CD8-positive, alpha-beta T cell (primary cell): ENCODE measurements at regions of chr11 and their contacts with region 1.

Region 1: DNA sequence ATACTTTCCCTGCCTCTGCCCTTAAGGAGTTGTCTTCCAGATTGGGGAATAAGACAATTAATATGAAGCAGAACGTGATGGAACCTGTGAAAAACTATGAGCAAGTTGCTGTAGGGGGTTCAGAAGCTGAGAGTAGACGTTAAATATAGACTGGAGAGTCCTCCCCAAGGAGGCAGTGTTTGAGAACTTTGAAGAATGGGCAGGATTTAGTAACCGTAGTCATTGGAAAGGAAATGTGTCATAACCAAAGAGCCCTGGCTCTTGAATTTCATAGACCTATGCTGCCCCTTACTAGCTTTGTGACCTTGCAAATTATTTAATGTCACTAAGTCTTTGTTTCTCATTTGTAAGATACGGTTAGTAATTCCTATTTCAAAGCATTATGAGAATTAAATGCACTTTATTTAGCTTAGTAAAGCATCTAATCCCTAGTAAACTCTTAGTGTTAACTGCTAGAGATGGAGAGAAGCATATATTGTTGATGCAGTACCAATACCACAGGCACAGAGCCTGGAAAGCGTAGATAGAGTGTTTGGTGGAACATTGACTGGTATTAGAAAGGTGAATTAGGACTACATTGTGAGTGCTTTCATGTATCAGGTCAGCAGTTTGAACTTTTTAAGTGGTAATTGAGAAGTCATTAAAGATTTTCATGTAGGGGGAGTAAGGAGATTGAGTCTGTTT is 54.1 kb downstream of the MCAM start:
- DNase-seq: peak in 2 of 9 experiments; percentile 32 to 56
- ATAC-seq: peak; percentile 28
- H3K4me3 ChIP-seq: no peak overlapping the region
- H3K4me3 Mint-ChIP-seq: no peak overlapping the region
- H3K27ac ChIP-seq: peak overlapping the region in 1 of 2 experiments; percentile 77
- H3K27ac Mint-ChIP-seq: no peak overlapping the region
- H3K4me1 ChIP-seq: peaks cover 86% of the 10 kb centered on the region
- H3K4me1 Mint-ChIP-seq: peaks cover 50% of the 10 kb centered on the region
- H3K27me3 ChIP-seq: no peaks in the 10 kb centered on the region
- H3K27me3 Mint-ChIP-seq: no peaks in the 10 kb centered on the region
- CTCF ChIP-seq: no peak

Region 2: GRCh38 chr11:119229288-119229672 is 33.5 kb before region 1 on chr11:
- CTCF ChIA-PET with region 1: interaction called, 3 read pairs
- POLR2A ChIA-PET with region 1: no interaction called
- intact Hi-C with region 1: loop called in 1 of 2 experiments (anchors 5 kb)
- DNase-seq: no peak
- ATAC-seq: no peak
- H3K4me3 ChIP-seq: no peak overlapping the region
- H3K4me3 Mint-ChIP-seq: peak overlapping the region; percentile 50
- H3K27ac ChIP-seq: no peak overlapping the region
- H3K27ac Mint-ChIP-seq: peak overlapping the region; percentile 72
- H3K4me1 ChIP-seq: peaks cover 24% of the 10 kb centered on the region
- H3K4me1 Mint-ChIP-seq: peaks cover 54% of the 10 kb centered on the region
- H3K27me3 ChIP-seq: no peaks in the 10 kb centered on the region
- H3K27me3 Mint-ChIP-seq: no peaks in the 10 kb centered on the region
- CTCF ChIP-seq: no peak

Region 3: GRCh38 chr11:119236490-119236889 is 26.3 kb before region 1 on chr11:
- CTCF ChIA-PET with region 1: no interaction called
- POLR2A ChIA-PET with region 1: interaction called, 3 read pairs
- intact Hi-C with region 1: loop called in 1 of 2 experiments (anchors 2 kb)
- DNase-seq: no peak
- ATAC-seq: no peak
- H3K4me3 ChIP-seq: no peak overlapping the region
- H3K4me3 Mint-ChIP-seq: no peak overlapping the region
- H3K27ac ChIP-seq: no peak overlapping the region
- H3K27ac Mint-ChIP-seq: no peak overlapping the region
- H3K4me1 ChIP-seq: peaks cover 20% of the 10 kb centered on the region
- H3K4me1 Mint-ChIP-seq: peaks cover 46% of the 10 kb centered on the region
- H3K27me3 ChIP-seq: no peaks in the 10 kb centered on the region
- H3K27me3 Mint-ChIP-seq: no peaks in the 10 kb centered on the region
- CTCF ChIP-seq: no peak